Gastrocnemius medialis (tissue), 4 donors: ENCODE measurements at regions of chr11 and their contacts with region 1.

Region 1: DNA sequence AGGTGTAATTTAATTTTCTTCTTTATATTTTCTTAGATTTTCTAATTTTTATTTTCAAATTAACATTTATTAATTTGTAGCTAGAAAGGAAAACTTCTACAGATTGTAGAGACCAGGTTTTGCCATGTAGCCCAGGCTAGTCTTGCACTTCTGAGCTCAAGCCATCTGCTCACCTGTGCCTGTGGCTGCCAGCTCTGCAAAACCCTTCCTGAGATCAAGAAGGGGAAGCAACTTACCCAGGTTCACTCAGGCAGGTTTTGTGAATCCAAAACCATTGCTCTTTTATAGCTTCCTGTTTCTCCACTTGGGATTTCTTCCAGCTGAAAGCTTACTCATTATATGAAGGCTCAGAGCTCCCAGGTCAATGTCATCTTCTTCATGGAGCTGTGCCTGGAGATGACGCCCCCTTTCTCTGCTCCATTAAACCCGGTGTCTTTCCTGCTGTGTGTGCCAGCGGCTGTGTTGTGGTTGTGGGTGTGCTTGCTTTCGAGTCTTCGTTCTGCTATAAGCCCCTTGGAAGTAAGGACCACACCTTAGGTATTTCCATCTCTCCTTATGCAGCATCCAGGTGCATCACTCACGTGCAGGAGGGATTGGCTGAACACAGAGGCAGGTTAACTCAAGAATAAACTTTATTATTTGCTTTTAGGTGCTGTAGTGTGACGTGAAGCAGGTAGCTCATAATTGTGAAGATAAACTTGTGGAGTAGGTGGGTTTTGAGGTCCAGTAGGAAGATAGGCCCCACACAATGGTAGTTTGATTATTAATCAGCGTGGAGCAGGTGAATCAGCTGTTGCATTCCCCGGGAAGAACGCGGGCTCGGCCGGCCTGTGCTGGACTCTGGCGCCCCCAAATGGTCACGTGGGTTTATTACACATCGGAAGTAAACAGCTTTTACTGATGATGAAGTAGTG is 42.2 kb upstream of the INCENP start:
- DNase-seq: peak; percentile 59 to 64
- ATAC-seq: peak; percentile 83 to 88
- H3K4me3 ChIP-seq: no peak overlapping the region
- H3K27ac ChIP-seq: no peak overlapping the region
- H3K4me1 ChIP-seq: peaks cover 0 to 7% of the 10 kb centered on the region in 2 donors
- H3K27me3 ChIP-seq: no peaks in the 10 kb centered on the region
- CTCF ChIP-seq: peak; percentile 79 to 93 (median 91)
- POLR2A ChIP-seq: no peak

Region 2: GRCh38 chr11:61803889-61804647 is 277.6 kb before region 1 on chr11:
- in situ Hi-C with region 1: loop called in 1 of 4 experiments (anchors 10 kb)
- intact Hi-C with region 1: no loop called
- DNase-seq: no peak
- ATAC-seq: no peak
- H3K4me3 ChIP-seq: no peak overlapping the region
- H3K27ac ChIP-seq: no peak overlapping the region
- H3K4me1 ChIP-seq: no peaks in the 10 kb centered on the region
- H3K27me3 ChIP-seq: no peaks in the 10 kb centered on the region
- CTCF ChIP-seq: no peak
- POLR2A ChIP-seq: no peak

Region 3: DNA sequence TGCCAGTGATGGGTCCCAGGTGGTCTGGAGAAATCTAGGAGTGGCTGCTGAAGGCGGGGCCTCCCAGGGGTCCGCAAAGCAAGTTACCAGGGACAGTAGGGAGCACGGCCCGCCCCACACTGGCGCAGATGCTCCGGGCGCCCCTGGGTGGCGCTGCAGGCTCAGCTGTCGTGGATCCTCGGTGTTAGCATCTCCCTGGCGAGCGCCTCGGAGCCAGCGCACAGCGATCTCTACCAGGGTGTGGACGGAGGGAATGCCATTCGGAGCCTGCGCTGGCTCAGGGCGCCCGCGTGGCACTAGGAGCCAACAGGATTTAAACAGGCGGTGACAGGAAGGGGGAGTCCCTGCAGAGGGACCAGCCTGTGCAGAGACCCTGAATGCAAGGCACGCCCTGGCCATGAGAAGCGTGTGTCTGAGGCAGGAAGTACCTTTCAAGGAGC is 210.5 kb before region 1 on chr11:
- in situ Hi-C with region 1: loop called in 1 of 4 experiments (anchors 10 kb)
- intact Hi-C with region 1: no loop called
- DNase-seq: peak; percentile 47 to 62
- ATAC-seq: peak; percentile 87 to 88
- H3K4me3 ChIP-seq: no peak overlapping the region
- H3K27ac ChIP-seq: peak overlapping the region; percentile 48 to 70 (median 66)
- H3K4me1 ChIP-seq: peaks cover 0 to 5% of the 10 kb centered on the region in 2 donors
- H3K27me3 ChIP-seq: no peaks in the 10 kb centered on the region
- CTCF ChIP-seq: peak; percentile 87 to 96 (median 93)
- POLR2A ChIP-seq: no peak